CD4-positive, alpha-beta T cell (primary cell): ENCODE measurements at regions of chr1 and their contacts with region 1.

Region 1: DNA sequence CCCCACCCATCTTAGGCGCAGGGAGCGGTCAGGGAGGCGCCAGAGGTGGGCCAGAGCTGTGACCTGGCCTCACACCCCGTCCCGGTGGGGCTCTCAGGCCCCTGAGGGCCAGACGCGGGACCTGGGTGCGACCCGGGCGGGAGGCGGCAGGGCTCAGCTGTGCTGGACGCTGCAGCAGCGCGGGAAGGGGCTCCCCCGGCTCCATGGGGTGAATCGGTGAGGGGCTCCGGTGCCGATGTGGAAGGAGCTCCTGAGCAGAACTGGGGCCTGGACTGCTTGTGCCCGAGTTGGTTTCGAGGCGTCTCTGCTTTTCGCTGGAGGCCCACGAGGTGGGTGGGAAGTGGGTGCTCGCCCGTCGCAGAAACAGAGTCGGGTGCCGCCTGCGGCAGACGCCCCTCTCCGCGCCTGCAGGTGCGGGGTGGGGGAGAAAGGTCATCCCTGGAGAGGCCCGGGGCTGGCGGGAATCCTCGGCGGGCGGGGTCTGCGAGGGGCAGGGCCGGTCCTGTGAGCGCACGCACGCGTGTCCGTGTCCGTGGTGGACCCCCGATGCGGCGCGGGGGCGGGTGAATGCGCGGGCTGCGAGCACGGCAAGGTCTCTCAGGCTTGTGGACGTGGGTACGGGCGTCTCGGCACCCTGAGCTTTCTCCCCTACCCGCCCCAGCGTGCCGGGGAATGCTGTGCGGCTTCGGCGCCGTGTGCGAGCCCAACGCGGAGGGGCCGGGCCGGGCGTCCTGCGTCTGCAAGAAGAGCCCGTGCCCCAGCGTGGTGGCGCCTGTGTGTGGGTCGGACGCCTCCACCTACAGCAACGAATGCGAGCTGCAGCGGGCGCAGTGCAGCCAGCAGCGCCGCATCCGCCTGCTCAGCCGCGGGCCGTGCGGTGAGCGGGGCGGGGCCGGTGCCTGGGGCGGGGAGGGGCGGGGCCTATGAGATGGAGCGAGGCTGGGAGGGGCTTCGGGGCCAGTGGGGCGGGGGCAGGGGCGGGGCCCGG is 20.4 kb downstream of the AGRN start:
- DNase-seq: peak; percentile 67 to 94 (median 78)
- ATAC-seq: peak; percentile 94
- H3K4me3 ChIP-seq: peak overlapping the region; percentile 44
- H3K4me3 Mint-ChIP-seq: peak overlapping the region; percentile 77
- H3K27ac ChIP-seq: no peak overlapping the region
- H3K27ac Mint-ChIP-seq: no peak overlapping the region
- H3K4me1 ChIP-seq: peaks cover 18% of the 10 kb centered on the region
- H3K4me1 Mint-ChIP-seq: peaks cover 16% of the 10 kb centered on the region
- H3K27me3 ChIP-seq: peaks cover 16 to 24% of the 10 kb centered on the region in 2 experiments
- H3K27me3 Mint-ChIP-seq: peaks cover 37% of the 10 kb centered on the region
- CTCF ChIP-seq: no peak

Region 2: GRCh38 chr1:1019122-1019999 is 20.9 kb before region 1 on chr1:
- CTCF ChIA-PET with region 1: interaction called, 5 read pairs
- POLR2A ChIA-PET with region 1: interaction called, 12 read pairs
- intact Hi-C with region 1: loop called in 1 of 2 experiments (anchors 1 kb)
- DNase-seq: peak; percentile 64 to 92 (median 78)
- ATAC-seq: peak; percentile 82
- H3K4me3 ChIP-seq: peak overlapping the region; percentile 40
- H3K4me3 Mint-ChIP-seq: peak overlapping the region; percentile 79
- H3K27ac ChIP-seq: no peak overlapping the region
- H3K27ac Mint-ChIP-seq: no peak overlapping the region
- H3K4me1 ChIP-seq: peaks cover 40% of the 10 kb centered on the region
- H3K4me1 Mint-ChIP-seq: peaks cover 22% of the 10 kb centered on the region
- H3K27me3 ChIP-seq: peaks cover 0 to 1% of the 10 kb centered on the region in 2 experiments
- H3K27me3 Mint-ChIP-seq: peaks cover 5% of the 10 kb centered on the region
- CTCF ChIP-seq: peak; percentile 43

Region 3: DNA sequence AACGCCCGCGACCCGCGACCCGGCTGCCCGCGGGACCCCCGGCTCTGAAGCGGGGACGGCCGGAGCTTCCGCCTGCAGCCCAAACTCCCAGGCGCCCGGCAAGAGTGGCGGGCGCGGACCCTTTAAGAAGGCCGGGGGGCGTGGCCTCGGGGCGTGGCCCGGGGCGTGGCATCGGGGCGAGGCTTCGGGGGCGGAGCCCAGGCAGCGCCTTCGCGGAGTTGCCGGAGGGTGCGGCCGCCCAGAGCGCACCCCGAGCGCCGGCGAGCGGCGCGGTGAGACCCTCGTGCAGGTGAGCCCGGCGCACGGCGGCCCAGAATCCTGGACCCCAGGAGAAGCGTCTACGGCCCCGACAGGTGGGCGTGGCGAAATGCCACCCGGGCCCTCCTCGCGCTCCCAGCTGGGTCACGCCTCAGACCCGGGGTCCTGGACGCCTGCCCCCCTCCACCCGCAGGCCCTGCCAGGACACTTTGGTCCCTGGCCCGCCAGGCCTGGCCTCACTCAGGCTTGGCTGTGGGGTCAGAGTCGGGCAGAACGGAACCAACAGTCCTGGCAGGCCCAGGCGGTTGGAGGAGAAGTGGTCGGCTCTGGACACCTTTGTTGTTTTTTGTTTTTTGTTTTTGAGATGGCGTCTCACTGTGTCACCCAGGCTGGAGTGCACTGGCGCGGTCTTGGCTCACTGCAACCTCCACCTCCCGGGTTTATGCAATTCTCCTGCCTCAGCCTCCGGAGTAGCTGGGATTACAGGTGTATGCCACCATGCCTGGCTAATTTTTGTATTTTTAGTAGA is 19.4 kb after region 1 on chr1:
- CTCF ChIA-PET with region 1: interaction called, 3 read pairs
- POLR2A ChIA-PET with region 1: no interaction called
- intact Hi-C with region 1: loop called in 1 of 2 experiments (anchors 1 kb)
- DNase-seq: peak; percentile 78 to 94 (median 88)
- ATAC-seq: peak; percentile 76
- H3K4me3 ChIP-seq: peak overlapping the region; percentile 24
- H3K4me3 Mint-ChIP-seq: no peak overlapping the region
- H3K27ac ChIP-seq: no peak overlapping the region
- H3K27ac Mint-ChIP-seq: no peak overlapping the region
- H3K4me1 ChIP-seq: peaks cover 41% of the 10 kb centered on the region
- H3K4me1 Mint-ChIP-seq: peaks cover 4% of the 10 kb centered on the region
- H3K27me3 ChIP-seq: peaks cover 44 to 52% of the 10 kb centered on the region in 2 experiments
- H3K27me3 Mint-ChIP-seq: peaks cover 40% of the 10 kb centered on the region
- CTCF ChIP-seq: no peak

Region 4: DNA sequence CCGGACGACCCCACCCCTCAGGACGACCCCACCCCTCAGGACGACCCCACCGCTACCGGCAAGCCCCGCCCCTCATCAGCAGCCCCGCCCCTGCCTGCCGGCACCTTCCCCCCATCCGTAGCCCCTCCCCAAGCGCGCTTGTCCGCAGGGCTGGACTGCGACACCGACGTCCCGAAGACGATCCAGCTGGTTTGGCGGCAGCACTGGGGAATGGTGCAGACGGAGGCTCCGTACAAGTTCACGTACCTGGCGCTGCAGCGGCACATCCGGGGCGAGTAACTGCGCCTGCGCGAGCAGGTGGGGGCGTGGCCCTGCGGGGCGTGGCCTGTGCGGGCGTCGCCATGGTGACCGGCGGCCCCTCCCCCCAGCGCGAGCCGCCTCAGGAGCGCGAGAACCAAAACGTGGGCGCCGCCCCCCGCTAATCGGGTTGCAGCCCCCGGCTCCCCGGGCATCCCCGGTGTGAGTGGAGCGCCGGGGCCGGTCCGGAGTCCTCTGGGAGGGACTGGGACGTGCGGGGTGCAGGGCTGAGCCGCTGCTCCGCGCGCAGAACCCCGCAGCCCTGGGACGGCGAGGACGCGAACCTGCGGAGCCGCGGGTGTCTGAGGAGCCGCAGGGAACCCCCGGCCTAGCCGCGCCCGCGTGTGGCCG is 28.9 kb after region 1 on chr1:
- CTCF ChIA-PET with region 1: interaction called, 3 read pairs
- POLR2A ChIA-PET with region 1: no interaction called
- intact Hi-C with region 1: loop called in 1 of 2 experiments (anchors 2 kb)
- DNase-seq: peak; percentile 86 to 97 (median 92)
- ATAC-seq: peak; percentile 69
- H3K4me3 ChIP-seq: peak overlapping the region; percentile 61
- H3K4me3 Mint-ChIP-seq: peak overlapping the region; percentile 87
- H3K27ac ChIP-seq: peak overlapping the region in 1 of 2 donors; percentile 41
- H3K27ac Mint-ChIP-seq: peak overlapping the region; percentile 78
- H3K4me1 ChIP-seq: peaks cover 22% of the 10 kb centered on the region
- H3K4me1 Mint-ChIP-seq: no peaks in the 10 kb centered on the region
- H3K27me3 ChIP-seq: peaks cover 9 to 11% of the 10 kb centered on the region in 2 experiments
- H3K27me3 Mint-ChIP-seq: peaks cover under 1% of the 10 kb centered on the region
- CTCF ChIP-seq: no peak

Region 5: DNA sequence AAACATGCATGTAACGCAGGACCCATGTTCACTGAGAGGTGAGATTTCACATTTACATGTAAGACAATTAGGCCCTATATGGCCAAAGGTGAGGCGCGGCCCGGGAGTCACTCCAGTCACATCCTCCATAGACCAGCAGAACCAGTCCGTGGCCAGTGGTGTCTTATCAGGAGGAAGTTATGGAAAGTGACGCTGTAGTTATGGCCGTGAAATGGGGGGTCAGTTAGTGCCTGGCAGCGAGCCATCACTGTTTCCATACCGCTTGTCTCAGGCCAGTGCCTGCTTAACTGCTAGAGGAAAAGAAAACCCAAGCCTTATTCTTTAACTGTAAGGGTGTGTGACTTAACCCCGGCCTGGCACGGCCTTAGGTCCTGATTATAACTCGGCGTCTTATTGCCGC is 69.4 kb after region 1 on chr1:
- CTCF ChIA-PET with region 1: no interaction called
- POLR2A ChIA-PET with region 1: interaction called, 3 read pairs
- intact Hi-C with region 1: loop called in 1 of 2 experiments (anchors 5 kb)
- DNase-seq: peak in 1 of 14 experiments; percentile 12
- ATAC-seq: no peak
- H3K4me3 ChIP-seq: no peak overlapping the region
- H3K4me3 Mint-ChIP-seq: no peak overlapping the region
- H3K27ac ChIP-seq: no peak overlapping the region
- H3K27ac Mint-ChIP-seq: no peak overlapping the region
- H3K4me1 ChIP-seq: peaks cover 7% of the 10 kb centered on the region
- H3K4me1 Mint-ChIP-seq: peaks cover 9% of the 10 kb centered on the region
- H3K27me3 ChIP-seq: no peaks in the 10 kb centered on the region
- H3K27me3 Mint-ChIP-seq: no peaks in the 10 kb centered on the region
- CTCF ChIP-seq: no peak